ENCODE measurements at regions of chr1 and their contacts with region 1.

Region 1: DNA sequence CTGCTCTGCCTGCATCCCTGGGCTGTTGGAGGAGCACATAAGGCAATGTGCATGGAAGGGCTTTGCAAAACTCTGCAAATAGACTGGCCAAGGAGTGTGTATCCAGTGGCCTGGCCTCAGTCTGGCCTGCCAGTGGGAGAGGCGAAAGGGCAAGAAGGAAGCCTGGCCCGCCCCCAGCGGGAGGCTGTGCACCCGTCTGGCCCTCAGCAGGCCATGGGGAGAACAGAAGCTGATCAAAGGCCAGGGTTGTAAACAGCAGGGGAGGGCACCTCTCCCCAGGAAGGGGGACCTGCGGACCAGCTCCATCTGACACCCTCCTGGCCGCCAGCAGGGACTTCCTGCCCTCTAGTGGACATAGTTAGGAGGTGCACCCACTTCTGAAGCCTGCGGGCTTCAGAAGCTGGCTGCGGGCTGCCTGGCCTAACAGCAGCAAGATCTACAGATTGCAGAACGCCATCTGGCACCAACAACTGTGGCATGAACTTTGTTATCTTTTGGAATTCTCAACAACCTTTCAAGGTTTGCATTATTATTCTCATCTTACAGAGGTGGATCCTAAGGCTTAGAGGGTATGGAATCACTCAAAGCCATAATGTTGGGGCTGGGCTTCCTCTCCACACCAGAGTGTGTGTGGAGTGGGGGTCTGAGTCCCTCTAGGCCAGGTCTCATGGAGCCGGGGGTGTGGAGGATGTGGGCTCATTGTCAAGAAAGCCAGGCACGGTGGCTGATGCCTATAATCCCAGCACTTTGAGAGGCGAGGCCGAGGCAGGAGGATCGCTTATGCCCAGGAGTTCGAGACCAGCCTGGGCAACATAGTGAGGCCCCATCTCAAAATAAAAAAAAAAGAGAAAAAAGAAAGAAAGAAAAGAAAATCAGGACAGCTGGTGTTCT is 18.9 kb upstream of the CDK18 start:
- DNase-seq: peak; percentile 93
- ATAC-seq: peak; percentile 98
- H3K4me3 ChIP-seq: no peak overlapping the region
- H3K27ac ChIP-seq: no peak overlapping the region
- H3K4me1 ChIP-seq: peaks cover 23% of the 10 kb centered on the region
- H3K27me3 ChIP-seq: peaks cover 7 to 20% of the 10 kb centered on the region in 2 experiments; a peak in 3 of 5 replicates
- CTCF ChIP-seq: peak; percentile 98
- EP300 ChIP-seq: peak in 1 of 2 experiments; percentile 39; a peak in 1 of 4 replicates
- POLR2A ChIP-seq: no peak
- RAD21 ChIP-seq: peak; percentile 99

Region 2: DNA sequence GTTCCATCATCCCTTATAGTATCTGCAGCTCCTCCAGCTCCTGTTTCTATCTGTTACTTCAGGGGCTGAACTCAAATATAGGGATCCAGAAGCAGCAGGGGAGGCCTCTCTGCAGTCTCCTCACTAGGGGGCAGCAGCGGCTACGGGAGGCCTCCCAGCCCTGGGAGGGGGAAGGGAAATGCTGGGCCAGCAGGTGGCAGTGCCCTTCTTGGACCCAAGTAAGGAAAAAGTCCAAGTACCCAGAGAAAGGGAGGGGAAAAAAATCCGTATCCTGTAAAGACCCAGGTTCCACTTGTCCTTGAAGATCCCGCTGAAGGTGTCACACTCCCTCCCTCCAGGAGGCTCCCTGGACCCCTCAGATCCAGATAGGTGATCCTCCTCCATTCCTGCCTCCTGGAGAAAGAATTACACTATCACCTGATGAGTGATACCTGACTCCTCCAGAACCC is 149.9 kb before region 1 on chr1:
- CTCF ChIA-PET with region 1: interaction called, 7 read pairs
- POLR2A ChIA-PET with region 1: no interaction called
- in situ Hi-C with region 1: no loop called
- intact Hi-C with region 1: loop called (anchors 5 kb)
- DNase-seq: peak; percentile 68
- ATAC-seq: peak; percentile 92
- H3K4me3 ChIP-seq: no peak overlapping the region
- H3K27ac ChIP-seq: no peak overlapping the region
- H3K4me1 ChIP-seq: no peaks in the 10 kb centered on the region
- H3K27me3 ChIP-seq: peaks cover 4 to 43% of the 10 kb centered on the region in 2 experiments
- CTCF ChIP-seq: peak; percentile 92
- EP300 ChIP-seq: no peak
- POLR2A ChIP-seq: no peak
- RAD21 ChIP-seq: peak; percentile 81

Region 3: DNA sequence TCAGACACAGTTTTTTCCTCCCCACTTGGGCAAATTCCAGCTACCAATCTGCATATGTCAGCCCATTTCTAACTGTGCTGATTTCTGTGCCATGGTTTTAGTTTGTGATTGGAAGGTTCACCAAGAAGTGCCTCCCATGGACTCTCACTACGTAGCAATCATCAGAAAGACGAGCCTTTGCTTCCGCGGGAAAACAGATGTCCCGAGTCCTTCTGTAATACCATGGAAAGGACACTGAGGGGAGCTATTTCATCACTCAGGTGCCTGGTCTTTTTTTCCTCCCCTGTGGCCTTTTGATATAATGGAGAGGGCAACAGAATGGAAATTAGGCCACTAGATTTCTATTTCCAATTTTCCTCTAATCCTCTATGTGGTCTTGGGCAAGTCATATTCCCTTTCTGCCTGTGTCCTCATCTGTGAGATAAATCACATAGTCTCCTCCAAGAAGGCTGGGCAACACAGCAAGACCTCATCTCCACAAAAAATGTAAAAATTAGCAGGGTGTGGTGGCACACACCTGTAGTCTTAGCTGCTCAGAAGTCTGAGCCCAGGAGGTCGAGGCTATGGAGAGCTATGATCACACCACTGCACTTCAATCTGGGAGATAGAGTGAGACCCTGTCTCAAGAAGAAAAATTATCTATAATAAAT is 88.5 kb before region 1 on chr1:
- CTCF ChIA-PET with region 1: interaction called, 51 read pairs
- POLR2A ChIA-PET with region 1: interaction called, 6 read pairs
- in situ Hi-C with region 1: loop called (anchors 5 kb)
- intact Hi-C with region 1: loop called (anchors 1 kb)
- DNase-seq: peak; percentile 64
- ATAC-seq: peak; percentile 67
- H3K4me3 ChIP-seq: no peak overlapping the region
- H3K27ac ChIP-seq: no peak overlapping the region
- H3K4me1 ChIP-seq: peaks cover 12% of the 10 kb centered on the region
- H3K27me3 ChIP-seq: no peaks in the 10 kb centered on the region; a peak in 1 of 5 replicates
- CTCF ChIP-seq: peak; percentile 87
- EP300 ChIP-seq: no peak
- POLR2A ChIP-seq: no peak
- RAD21 ChIP-seq: peak; percentile 80

Region 4: GRCh38 chr1:205440476-205441317 is 44.9 kb before region 1 on chr1:
- CTCF ChIA-PET with region 1: interaction called, 14 read pairs
- POLR2A ChIA-PET with region 1: interaction called, 9 read pairs
- in situ Hi-C with region 1: no loop called
- intact Hi-C with region 1: loop called (anchors 2 kb)
- DNase-seq: peak; percentile 91
- ATAC-seq: peak; percentile 90
- H3K4me3 ChIP-seq: peak overlapping the region in 1 of 3 experiments; percentile 9; a peak in 1 of 6 replicates
- H3K27ac ChIP-seq: no peak overlapping the region
- H3K4me1 ChIP-seq: peaks cover 70% of the 10 kb centered on the region
- H3K27me3 ChIP-seq: peaks cover 3 to 7% of the 10 kb centered on the region in 2 experiments; a peak in 4 of 5 replicates
- CTCF ChIP-seq: no peak
- EP300 ChIP-seq: no peak
- POLR2A ChIP-seq: no peak
- RAD21 ChIP-seq: no peak

Region 5: GRCh38 chr1:205523891-205524793 is 38.6 kb after region 1 on chr1:
- CTCF ChIA-PET with region 1: interaction called, 86 read pairs
- POLR2A ChIA-PET with region 1: interaction called, 3 read pairs
- in situ Hi-C with region 1: loop called (anchors 5 kb)
- intact Hi-C with region 1: loop called (anchors 1 kb)
- DNase-seq: peak; percentile 68
- ATAC-seq: peak; percentile 70
- H3K4me3 ChIP-seq: no peak overlapping the region
- H3K27ac ChIP-seq: no peak overlapping the region
- H3K4me1 ChIP-seq: peaks cover 23% of the 10 kb centered on the region
- H3K27me3 ChIP-seq: no peaks in the 10 kb centered on the region
- CTCF ChIP-seq: peak; percentile 95
- EP300 ChIP-seq: no peak
- POLR2A ChIP-seq: no peak
- RAD21 ChIP-seq: peak; percentile 91

Region 6: DNA sequence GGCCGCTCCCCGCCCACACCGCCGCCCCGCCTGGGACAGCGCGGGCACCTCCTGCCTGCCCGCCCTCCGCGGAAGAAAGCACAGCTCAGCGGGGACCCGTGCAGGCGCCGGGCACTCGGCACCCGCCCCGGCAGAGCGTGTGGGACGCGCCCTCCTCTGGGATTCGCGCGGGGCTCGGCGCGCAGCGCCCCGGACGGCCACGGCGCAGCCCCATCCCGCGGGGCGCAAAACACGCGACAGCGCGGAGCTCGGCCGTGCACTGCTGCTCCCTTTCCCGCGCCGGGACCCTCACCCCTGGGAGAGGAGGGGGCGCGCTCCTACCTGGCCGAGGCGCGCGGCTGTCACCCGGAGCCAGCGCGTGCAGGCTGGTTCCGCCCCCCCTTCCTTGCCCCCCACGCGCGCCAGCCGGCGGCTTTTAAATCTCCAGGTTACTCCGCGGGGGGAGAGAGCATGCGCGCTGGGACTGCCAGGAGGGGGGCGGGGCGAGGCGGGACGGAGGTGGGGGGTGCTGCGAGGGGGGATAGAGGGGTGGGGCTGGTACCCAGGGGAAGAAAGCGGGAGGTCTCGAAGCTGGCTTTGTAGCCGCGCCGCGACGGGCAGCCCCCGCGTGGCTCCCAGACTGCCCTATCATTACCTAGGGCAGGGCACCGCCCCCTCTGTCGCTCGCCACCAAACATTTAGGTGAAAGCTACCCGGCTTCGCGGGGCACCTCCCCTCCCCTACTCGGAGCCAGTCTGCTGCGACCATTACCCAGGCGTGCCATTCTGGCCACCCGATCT is 194.7 kb after region 1 on chr1 and contains the start of gene SLC45A3:
- CTCF ChIA-PET with region 1: no interaction called
- POLR2A ChIA-PET with region 1: no interaction called
- in situ Hi-C with region 1: no loop called
- intact Hi-C with region 1: no loop called
- DNase-seq: no peak
- ATAC-seq: peak; percentile 33
- H3K4me3 ChIP-seq: peak within 1 kb of the TSS; percentile 62 to 79 (median 74)
- H3K27ac ChIP-seq: no peak within 1 kb of the TSS
- H3K4me1 ChIP-seq: peaks cover 60% of the 10 kb centered on the region
- H3K27me3 ChIP-seq: peaks cover 0 to 2% of the 10 kb centered on the region in 2 experiments; a peak in 2 of 5 replicates
- CTCF ChIP-seq: no peak
- EP300 ChIP-seq: no peak
- POLR2A ChIP-seq: no peak
- RAD21 ChIP-seq: no peak
- total RNA-seq, gene SLC45A3: 1.9 and 3.4 TPM in 2 replicates

Measured in HepG2 (cell line).